ENCODE measurements at regions of chr15 and their contacts with region 1.

Region 1: GRCh38 chr15:52139599-52140491 is 27.3 kb upstream of the BCL2L10 start:
- DNase-seq: peak; percentile 64 to 95
- H3K4me3 ChIP-seq: no peak overlapping the region
- CTCF ChIP-seq: no peak
- POLR2A ChIP-seq: no peak

Region 2: DNA sequence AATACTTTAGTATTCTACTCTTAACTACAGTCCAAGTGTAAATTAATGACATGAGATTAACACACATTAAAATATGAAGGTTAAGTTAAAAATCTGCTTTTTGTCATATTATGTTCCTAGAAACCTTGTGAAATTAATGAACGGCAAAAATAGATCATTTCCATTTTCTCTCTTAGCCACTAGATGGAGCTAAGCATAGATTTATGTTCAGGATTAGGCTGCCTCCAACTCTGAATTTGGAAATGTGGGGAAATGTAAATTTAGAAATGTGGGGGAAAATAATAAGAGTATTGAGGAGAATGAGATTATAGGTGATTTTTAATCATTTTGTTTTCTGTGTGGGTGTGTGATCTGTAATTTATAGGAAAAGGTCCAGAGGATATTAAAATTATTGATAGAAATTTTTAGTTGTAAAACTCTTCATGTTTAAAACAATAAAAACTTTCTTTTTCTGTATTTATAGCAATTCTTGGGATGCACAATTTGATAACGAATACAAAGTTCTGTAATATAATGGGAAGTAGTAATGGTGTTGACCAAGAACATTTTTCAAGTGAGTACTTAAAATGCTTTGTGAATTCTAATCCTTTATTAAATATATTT is 251.2 kb before region 1 on chr15:
- intact Hi-C with region 1: loop called (anchors 10 kb)
- DNase-seq: no peak
- H3K4me3 ChIP-seq: no peak overlapping the region
- CTCF ChIP-seq: no peak
- POLR2A ChIP-seq: no peak

Region 3: GRCh38 chr15:51982013-51982769 is 157.7 kb before region 1 on chr15:
- intact Hi-C with region 1: loop called (anchors 5 kb)
- DNase-seq: no peak
- H3K4me3 ChIP-seq: no peak overlapping the region
- CTCF ChIP-seq: no peak
- POLR2A ChIP-seq: no peak

Region 4: DNA sequence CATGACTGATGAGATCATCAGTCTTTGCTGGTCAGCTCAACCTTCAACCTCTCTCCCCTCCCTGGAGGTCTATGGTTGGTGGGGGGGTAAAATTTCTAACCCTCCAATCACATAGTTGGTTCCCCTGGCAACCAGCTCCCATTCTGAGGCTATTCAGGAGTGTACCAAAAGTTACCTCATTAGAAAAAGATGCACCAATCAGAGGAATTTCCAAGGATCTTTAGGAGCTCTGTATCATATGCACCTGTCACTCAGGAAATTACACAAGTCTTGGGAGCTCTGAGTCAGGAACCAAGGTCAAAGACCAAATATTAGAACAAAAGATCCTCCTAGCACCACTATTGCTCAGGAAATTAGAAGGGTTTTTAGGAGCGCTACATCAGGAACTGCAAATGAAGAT is 146.9 kb before region 1 on chr15:
- intact Hi-C with region 1: no loop called
- DNase-seq: no peak
- H3K4me3 ChIP-seq: no peak overlapping the region
- CTCF ChIP-seq: no peak
- POLR2A ChIP-seq: no peak

Region 5: DNA sequence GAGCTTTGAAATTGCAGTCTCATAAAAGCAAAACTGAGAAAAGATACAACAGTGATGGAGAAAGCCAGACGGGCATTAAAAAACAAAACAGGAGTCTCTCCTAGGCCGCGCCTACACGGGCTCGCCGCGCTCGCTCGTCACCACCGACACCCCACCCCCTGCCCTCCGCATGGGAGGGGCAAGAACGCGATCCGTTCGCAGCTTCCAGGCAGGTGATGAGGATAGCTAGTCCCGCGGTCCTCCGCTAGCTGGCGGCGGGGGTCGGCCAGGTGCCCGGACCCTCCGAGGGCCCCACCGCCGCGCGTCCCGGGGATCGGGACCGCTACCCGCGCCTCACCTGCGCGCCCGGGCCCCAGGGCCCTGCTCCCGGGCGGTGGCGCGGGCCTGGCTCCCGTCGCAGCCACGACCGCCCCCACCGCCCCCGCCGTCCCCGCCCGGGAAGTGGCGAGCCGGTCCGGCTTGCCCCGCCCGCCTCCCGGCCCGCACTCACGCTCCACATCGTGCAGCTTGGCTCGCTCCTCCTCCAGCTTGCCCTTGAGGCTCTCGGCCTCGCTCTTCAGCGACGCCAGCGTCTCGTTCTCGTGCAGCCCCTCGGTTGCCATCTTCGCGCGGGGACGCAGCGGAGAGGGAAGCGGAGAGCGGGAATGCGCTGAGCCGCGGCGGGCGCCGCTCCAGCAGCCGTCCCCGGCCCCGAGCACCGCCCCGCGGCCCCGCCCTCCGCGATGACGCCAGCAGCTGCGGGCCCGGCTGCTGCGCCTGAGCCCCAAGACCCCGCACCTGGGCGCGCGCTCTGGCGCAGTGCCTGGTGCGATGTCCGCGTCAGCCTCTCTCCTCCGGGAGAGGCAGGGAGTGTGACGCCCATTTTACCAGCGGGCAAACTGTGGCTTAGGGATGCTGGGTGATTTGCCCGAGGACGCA is 39.7 kb after region 1 on chr15:
- intact Hi-C with region 1: no loop called
- DNase-seq: peak; percentile 78 to 97
- H3K4me3 ChIP-seq: peak overlapping the region; percentile 70
- CTCF ChIP-seq: no peak
- POLR2A ChIP-seq: peak in 1 of 2 donors; percentile 9

Measured in lower leg skin (tissue), 4 donors.